GM12878 (cell line): ENCODE measurements at regions of chr13 and their contacts with region 1.

Region 1: GRCh38 chr13:50594276-50595051 is 249.0 kb downstream of the DLEU7 start:
- DNase-seq: peak; percentile 79
- ATAC-seq: peak; percentile 91
- H3K4me3 ChIP-seq: peak overlapping the region; percentile 53; the same call in 1 of the 2 replicates
- H3K27ac ChIP-seq: peak overlapping the region; percentile 62
- H3K4me1 ChIP-seq: peaks cover 45% of the 10 kb centered on the region
- H3K27me3 ChIP-seq: no peaks in the 10 kb centered on the region
- CTCF ChIP-seq: 0 out of 6 replicates have a peak, but pooled peaks of 1 of the 3 experiments have one; percentile 17
- EP300 ChIP-seq: peak; percentile 71 to 80
- POLR2A ChIP-seq: no peak
- RAD21 ChIP-seq: peak; percentile 47

Region 2: DNA sequence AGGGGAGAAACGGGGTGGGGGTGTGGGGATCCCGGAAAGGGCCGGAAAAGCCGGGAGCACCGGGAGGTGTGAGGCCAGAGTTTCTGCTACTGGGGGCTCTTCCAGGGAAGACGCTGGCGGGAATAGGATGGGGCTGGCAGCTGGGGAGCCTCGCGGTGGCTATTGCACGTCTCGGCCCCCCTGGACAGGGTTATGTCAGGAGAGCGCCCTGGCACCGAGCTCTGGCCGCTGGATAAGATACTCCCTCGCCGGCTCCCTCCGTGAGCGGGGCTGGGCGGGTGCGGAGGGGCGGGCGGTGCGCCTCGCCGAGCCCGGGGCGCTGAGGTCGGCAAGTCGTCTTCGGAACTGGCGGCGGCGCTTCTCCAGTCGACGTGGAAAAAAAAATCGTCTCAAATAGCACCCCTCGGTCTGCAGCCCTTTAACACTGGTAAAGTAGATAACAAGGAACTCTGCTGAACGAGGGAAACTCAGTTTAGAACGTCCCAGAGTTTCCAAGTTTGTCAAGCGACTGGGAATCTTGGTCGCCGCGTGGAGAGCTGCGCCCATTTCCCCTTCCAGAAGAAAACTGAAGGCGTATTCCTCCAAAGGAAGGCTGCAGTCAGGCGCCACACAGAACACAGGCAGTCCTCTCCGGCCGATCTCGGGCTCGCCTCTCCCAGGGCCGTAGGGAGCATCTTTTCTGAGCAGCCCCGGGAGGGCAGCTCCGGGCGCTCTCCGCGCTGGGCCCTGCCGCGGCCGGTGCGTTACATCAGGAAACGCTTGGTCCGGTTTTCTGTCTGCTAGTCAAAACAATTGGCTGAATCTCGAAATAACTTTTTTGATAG is 464.1 kb before region 1 on chr13:
- CTCF ChIA-PET with region 1: no interaction called
- POLR2A ChIA-PET with region 1: no interaction called
- RAD21 ChIA-PET with region 1: no interaction called
- SMC1A ChIA-PET with region 1: no interaction called
- in situ Hi-C with region 1: no loop called
- intact Hi-C with region 1: loop called (anchors 2 kb)
- DNase-seq: no peak
- ATAC-seq: peak; percentile 47
- H3K4me3 ChIP-seq: peak overlapping the region; percentile 50; the same call in 1 of the 2 replicates
- H3K27ac ChIP-seq: no peak overlapping the region
- H3K4me1 ChIP-seq: peaks cover 51% of the 10 kb centered on the region
- H3K27me3 ChIP-seq: peaks cover 13 to 31% of the 10 kb centered on the region in 2 experiments
- CTCF ChIP-seq: no peak
- EP300 ChIP-seq: no peak
- POLR2A ChIP-seq: no peak
- RAD21 ChIP-seq: no peak

Region 3: DNA sequence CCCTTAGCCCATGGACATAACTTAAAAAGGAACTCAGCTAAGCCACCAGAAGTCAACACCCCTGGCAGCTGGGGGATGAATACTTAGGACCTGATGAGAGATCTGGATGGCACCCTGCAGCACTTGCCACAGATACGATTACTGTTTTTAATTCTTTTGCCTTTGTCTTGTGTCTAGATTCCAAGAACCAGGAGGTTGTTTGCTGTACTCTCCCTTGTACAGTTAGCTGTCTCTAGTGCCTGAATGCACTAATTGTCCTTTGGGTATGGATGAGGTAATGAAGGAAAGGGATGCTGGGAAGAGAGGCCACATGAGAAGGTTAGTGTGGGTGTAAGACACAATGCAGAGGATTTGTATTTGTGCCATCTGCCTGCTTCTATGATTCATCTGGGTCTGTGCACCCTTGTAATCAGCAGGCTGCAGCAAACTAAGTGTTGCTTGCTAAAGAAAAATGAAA is 193.4 kb before region 1 on chr13:
- CTCF ChIA-PET with region 1: no interaction called
- POLR2A ChIA-PET with region 1: no interaction called
- RAD21 ChIA-PET with region 1: no interaction called
- SMC1A ChIA-PET with region 1: no interaction called
- in situ Hi-C with region 1: no loop called
- intact Hi-C with region 1: no loop called
- DNase-seq: no peak
- ATAC-seq: no peak
- H3K4me3 ChIP-seq: no peak overlapping the region
- H3K27ac ChIP-seq: no peak overlapping the region
- H3K4me1 ChIP-seq: no peaks in the 10 kb centered on the region
- H3K27me3 ChIP-seq: peaks cover 0 to 3% of the 10 kb centered on the region in 2 experiments; a peak in 1 of 4 replicates
- CTCF ChIP-seq: no peak
- EP300 ChIP-seq: no peak
- POLR2A ChIP-seq: no peak
- RAD21 ChIP-seq: no peak

Region 4: GRCh38 chr13:50608370-50608769 is 13.9 kb after region 1 on chr13:
- CTCF ChIA-PET with region 1: interaction called, 10 read pairs
- POLR2A ChIA-PET with region 1: no interaction called
- RAD21 ChIA-PET with region 1: no interaction called
- SMC1A ChIA-PET with region 1: interaction called, 13 read pairs
- in situ Hi-C with region 1: no loop called
- intact Hi-C with region 1: no loop called
- DNase-seq: no peak
- ATAC-seq: no peak
- H3K4me3 ChIP-seq: no peak overlapping the region
- H3K27ac ChIP-seq: no peak overlapping the region
- H3K4me1 ChIP-seq: no peaks in the 10 kb centered on the region
- H3K27me3 ChIP-seq: no peaks in the 10 kb centered on the region; a peak in 1 of 4 replicates
- CTCF ChIP-seq: no peak
- EP300 ChIP-seq: no peak
- POLR2A ChIP-seq: no peak
- RAD21 ChIP-seq: no peak

Region 5: DNA sequence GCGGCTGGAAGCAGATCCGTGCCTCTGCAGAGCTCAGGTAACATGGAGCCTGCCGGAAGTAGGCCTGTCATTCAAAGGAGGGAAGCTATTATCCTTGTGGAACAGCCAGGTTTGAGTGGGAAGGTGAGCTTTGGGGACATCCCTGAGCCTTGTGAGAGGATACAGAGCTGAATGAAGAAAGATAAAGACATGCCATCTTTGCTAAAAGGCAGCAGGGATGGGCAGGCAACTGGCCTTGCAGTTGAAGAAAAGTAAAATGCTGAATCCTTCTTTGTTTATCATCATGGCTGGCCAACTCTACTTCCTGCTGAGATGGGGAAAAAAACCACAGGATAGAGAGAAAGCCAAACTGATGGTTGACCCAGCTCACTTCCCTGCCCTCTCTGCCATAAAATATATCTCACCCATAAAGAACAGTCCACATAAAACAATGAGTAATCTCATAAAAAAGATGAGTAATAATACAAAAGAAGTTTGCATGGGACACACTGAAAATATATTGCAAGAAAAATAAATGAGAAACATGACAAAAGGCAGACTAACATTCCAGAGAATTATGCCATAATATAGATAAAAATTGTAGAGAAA is 22.8 kb after region 1 on chr13:
- CTCF ChIA-PET with region 1: interaction called, 10 read pairs
- POLR2A ChIA-PET with region 1: no interaction called
- RAD21 ChIA-PET with region 1: no interaction called
- SMC1A ChIA-PET with region 1: interaction called, 5 read pairs
- in situ Hi-C with region 1: no loop called
- intact Hi-C with region 1: no loop called
- DNase-seq: no peak
- ATAC-seq: no peak
- H3K4me3 ChIP-seq: no peak overlapping the region
- H3K27ac ChIP-seq: no peak overlapping the region
- H3K4me1 ChIP-seq: no peaks in the 10 kb centered on the region
- H3K27me3 ChIP-seq: peaks cover 0 to 5% of the 10 kb centered on the region in 2 experiments; a peak in 1 of 4 replicates
- CTCF ChIP-seq: no peak
- EP300 ChIP-seq: no peak
- POLR2A ChIP-seq: no peak
- RAD21 ChIP-seq: no peak

Region 6: GRCh38 chr13:50635504-50635903 is 41.0 kb after region 1 on chr13:
- CTCF ChIA-PET with region 1: interaction called, 3 read pairs
- POLR2A ChIA-PET with region 1: no interaction called
- RAD21 ChIA-PET with region 1: interaction called, 11 read pairs
- SMC1A ChIA-PET with region 1: interaction called, 18 read pairs
- in situ Hi-C with region 1: no loop called
- intact Hi-C with region 1: no loop called
- DNase-seq: peak; percentile 42
- ATAC-seq: peak; percentile 88
- H3K4me3 ChIP-seq: no peak overlapping the region
- H3K27ac ChIP-seq: 0 out of 2 replicates have a peak overlapping the region, but pooled peaks have one; percentile 4
- H3K4me1 ChIP-seq: peaks cover 8% of the 10 kb centered on the region
- H3K27me3 ChIP-seq: no peaks in the 10 kb centered on the region
- CTCF ChIP-seq: no peak
- EP300 ChIP-seq: no peak
- POLR2A ChIP-seq: no peak
- RAD21 ChIP-seq: no peak

Region 7: GRCh38 chr13:51058461-51059167 is 464.1 kb after region 1 on chr13:
- CTCF ChIA-PET with region 1: no interaction called
- POLR2A ChIA-PET with region 1: no interaction called
- RAD21 ChIA-PET with region 1: no interaction called
- SMC1A ChIA-PET with region 1: no interaction called
- in situ Hi-C with region 1: no loop called
- intact Hi-C with region 1: no loop called
- DNase-seq: no peak
- ATAC-seq: no peak
- H3K4me3 ChIP-seq: no peak overlapping the region
- H3K27ac ChIP-seq: no peak overlapping the region
- H3K4me1 ChIP-seq: no peaks in the 10 kb centered on the region
- H3K27me3 ChIP-seq: no peaks in the 10 kb centered on the region; a peak in 1 of 4 replicates
- CTCF ChIP-seq: no peak
- EP300 ChIP-seq: no peak
- POLR2A ChIP-seq: no peak
- RAD21 ChIP-seq: no peak